Left cardiac atrium (tissue), 4 donors: ENCODE measurements at regions of chr2 and their contacts with region 1.

Region 1: DNA sequence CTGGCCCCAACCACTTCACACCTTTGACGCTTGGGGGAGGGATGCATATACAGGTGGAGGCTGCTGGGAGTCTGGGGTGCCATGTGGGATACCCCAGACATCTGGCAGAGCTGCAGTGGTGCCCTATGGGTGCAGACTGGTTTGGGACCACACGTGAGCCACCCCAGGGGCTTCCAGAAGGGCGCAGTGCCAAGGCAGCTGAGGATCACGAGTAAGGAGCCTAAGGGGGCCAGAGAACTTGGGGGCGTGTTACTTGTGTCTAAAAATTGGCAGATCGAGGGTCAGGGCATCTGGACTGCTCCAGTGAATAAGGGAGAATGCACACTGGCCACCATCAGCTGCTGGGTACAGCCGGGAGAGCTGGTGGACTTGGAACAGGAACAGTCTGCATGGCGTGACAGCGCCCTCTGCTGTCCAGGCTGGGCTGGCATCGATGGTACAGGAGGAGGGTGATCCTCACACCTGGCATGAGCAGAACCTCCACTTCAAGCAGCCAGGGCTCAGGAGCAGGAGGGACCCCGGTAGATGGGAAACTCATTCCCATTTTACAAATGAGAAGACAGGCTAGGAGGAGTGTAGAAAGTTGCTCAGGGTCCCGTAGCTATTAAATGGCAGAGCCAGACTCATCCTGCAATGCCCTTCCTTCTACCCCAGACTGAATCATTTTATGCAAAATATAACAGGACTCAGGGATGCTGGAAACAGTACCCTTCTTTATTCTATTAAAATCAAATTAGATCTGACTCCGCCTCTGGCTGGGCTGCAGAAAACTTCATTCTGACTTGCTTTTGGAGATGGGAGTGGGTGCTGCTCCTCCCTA is 60.4 kb downstream of the ATOH8 start:
- DNase-seq: peak; percentile 91
- ATAC-seq: peak; percentile 93 to 94

Region 2: DNA sequence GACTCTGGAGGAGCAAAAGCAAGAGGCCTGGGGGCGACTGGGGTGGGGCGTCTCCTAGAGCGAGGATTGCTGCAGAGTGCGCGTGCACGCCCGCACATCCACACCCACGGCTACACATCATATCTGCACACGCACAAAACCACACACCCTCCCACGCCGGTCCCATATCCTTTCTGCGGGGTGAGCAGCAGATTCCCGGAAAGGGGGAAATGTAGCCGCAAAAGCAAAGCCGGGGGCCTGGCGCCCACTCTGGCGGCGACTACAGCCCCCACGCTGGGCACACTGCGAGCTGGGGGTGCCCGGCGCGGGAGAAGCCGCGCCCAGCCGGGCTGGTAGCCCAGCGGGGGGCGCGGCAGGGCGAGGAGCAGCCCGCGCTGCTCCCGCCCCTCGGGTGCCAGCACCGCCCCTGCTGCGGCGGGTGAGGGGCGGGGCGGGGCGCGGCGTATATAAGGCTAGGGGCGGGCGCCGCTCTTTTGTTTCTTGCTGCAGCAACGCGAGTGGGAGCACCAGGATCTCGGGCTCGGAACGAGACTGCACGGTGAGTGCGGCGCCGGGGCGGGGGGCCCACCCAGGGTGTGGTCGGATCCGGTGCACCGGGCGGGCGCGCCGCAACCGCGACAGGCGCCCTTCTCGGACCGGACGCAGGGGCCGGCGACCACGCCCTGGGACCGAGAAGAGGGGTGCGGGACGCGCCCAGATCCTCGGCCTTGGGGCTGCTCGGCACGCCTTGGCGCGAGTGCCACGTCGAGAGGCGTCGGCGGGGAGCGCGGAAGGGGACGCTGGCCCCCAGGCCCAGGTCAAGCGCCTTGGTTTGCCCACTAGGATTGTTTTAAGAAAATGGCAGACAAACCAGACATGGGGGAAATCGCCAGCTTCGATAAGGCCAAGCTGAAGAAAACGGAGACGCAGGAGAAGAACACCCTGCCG is 908.7 kb before region 1 on chr2 and contains the start of gene TMSB10:
- intact Hi-C with region 1: no loop called
- DNase-seq: peak; percentile 91
- ATAC-seq: peak; percentile 89 to 93
- total RNA-seq, gene TMSB10: 751 to 893 TPM

Region 3: DNA sequence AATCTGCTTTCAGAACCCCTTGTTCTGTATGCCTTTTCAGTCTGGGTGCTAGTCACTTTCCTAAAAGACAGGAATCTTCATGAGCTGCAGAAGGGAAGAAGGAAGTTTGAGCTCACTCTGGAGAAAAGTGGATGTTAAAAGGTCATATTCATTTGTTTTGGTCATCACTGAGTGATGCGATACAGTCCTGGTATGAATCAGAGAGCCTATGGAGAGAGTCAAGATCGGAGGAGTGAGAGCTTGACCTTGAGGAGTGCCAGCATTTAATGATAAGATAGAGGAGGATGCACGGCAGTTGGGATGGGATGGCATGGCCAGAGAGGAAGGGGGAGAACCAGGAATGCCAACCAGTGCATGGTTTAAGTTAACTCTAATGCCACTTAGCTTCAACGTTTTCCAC is 178.6 kb before region 1 on chr2:
- intact Hi-C with region 1: loop called (anchors 5 to 10 kb)
- DNase-seq: no peak
- ATAC-seq: peak in 1 of 2 donors; percentile 72

Region 4: GRCh38 chr2:85648619-85649018 is 165.6 kb before region 1 on chr2:
- intact Hi-C with region 1: loop called in 1 of 2 experiments (anchors 10 kb)
- DNase-seq: no peak
- ATAC-seq: peak in 1 of 2 donors; percentile 18

Region 5: DNA sequence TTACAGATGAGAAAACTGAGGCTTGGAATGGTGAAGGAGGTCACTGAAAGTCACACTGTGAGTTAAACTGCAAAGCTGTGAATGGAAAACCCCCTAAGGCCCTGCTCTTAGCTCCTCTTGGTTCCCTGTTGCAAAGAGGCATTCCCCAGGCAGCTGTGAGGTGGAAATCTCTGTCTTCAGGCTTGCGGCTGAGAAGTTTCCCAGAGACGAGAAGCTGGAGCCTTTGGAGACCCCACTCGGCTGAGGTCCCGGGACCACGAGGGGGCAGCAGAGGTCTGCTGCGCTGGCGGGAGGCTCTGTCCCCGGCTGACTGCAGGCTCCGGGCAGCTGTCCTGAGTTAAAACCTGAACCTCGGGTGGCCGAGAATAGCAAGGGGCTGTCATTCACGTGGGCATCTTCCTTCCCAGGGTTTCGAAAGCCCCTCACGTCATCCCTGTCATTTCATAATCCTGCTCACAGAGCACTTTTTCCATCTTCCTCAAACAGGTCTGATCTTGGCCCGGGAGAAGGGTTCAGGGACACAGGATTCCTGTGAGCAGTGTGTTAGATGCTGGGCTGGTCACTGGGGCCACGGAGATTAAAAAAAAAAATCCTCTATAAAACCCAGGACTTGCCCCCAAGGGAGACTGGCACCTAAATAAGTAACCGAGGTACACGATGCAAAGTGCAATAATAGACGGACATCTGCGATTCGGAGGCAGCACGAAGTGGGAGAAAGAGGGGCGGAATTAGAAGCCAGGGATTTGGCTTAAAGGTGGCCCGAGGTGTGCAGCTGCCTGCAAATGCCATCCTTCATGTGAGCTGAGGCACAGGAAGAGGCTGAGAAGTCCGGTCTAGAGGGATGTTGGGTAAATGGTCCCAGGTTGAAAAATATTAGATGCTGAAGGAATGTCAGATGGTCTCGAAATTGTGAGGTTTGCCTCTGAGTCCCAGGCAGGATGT is 85.0 kb before region 1 on chr2:
- intact Hi-C with region 1: loop called (anchors 1 to 5 kb)
- DNase-seq: peak; percentile 92
- ATAC-seq: peak; percentile 95 to 97